MCF 10A (cell line): ENCODE measurements at regions of chr5 and their contacts with region 1.

Region 1: DNA sequence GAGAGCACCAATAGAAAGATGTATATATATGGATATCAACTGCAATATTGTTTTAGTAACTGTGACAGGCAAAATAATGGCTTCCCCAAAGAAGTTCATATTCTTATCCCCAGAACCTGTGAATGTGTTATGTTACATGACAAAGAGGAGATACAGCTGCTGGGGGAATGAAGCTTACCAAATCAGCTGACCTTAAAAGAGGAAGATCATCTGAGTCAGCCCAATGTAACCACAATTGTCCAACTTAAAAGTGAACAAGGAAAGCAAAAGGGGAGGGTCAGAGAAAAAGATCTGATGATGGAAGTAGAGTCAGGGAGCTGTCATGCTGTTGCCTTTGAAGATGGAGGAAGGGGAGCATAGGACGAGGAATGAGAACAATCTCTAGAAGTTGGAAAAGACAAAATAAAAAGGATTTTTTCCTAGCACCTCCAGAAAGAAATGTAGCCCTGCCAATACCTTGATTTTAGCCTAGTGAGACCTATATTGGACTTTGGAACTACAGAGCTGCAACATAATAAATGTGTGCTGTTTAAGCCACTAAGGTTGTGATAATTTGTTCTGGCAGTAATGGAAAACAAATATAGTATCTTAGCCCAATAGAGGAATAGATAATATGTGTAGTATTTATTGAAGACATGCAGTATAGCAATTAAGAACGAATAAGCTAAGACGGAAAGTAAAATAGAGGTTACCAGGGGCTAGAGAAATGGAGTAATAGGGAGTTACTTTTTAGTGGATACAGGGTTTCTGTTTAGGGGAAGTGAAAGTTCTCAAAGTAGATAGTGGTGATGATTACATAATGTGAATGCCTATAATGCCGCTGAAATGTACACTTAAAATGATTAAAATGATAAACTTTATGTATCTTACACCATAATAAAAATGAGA is 115.9 kb downstream of the PIK3R1 start:
- DNase-seq: no peak
- H3K4me3 Mint-ChIP-seq: no peak overlapping the region
- H3K27ac Mint-ChIP-seq: no peak overlapping the region
- H3K4me1 Mint-ChIP-seq: peaks cover 31% of the 10 kb centered on the region
- H3K27me3 Mint-ChIP-seq: no peaks in the 10 kb centered on the region
- CTCF ChIP-seq: no peak

Region 2: DNA sequence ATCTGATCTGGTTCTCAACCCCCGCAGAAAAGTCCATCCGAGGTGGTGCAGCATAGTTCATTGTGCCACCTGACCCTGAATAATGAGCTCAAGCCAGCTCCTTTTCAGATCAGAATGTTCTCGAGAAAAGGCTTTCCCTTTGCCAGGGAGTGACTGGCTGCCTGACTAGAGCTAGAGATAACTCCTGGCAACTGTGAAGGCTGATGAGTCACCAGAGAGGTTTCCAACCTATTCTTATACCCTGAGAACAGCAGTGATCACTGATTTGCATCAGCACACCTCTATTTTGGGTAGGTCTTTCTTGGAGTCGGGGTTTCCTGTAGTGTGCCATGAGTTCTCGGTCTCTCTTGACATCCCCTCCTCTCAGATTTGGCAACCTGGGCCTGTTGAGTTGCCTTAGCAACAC is 12.0 kb after region 1 on chr5:
- CTCF ChIA-PET with region 1: interaction called, 12 read pairs
- POLR2A ChIA-PET with region 1: interaction called, 9 read pairs
- intact Hi-C with region 1: loop called (anchors 1 kb)
- DNase-seq: peak; percentile 97
- H3K4me3 Mint-ChIP-seq: no peak overlapping the region
- H3K27ac Mint-ChIP-seq: peak overlapping the region; percentile 94
- H3K4me1 Mint-ChIP-seq: peaks cover 38% of the 10 kb centered on the region
- H3K27me3 Mint-ChIP-seq: no peaks in the 10 kb centered on the region
- CTCF ChIP-seq: no peak

Region 3: DNA sequence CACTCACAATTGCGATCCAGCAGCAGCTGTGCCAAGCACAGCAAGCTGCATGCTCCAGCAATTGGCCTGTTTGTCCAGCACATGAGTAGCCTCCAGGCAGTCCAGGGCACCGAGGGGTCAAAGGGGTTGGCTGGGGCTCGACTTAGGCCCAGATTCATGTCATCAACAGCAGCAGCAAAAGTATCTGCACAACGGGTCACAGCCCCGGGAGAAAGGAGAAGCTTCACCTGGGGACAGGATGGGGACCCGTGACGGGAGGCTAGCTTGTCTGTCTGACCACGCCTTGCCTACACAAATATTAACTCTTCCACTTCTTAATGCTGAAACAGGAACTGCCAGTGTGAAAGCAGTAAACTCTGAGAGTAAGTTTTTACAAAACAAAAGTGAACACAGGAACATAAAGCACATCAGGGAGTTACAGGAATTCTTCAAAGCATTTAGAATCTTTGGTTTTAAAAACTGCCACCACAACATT is 75.4 kb after region 1 on chr5:
- CTCF ChIA-PET with region 1: no interaction called
- POLR2A ChIA-PET with region 1: no interaction called
- intact Hi-C with region 1: loop called (anchors 5 kb)
- DNase-seq: no peak
- H3K4me3 Mint-ChIP-seq: no peak overlapping the region
- H3K27ac Mint-ChIP-seq: peak overlapping the region; percentile 69
- H3K4me1 Mint-ChIP-seq: peaks cover 34% of the 10 kb centered on the region
- H3K27me3 Mint-ChIP-seq: no peaks in the 10 kb centered on the region
- CTCF ChIP-seq: no peak

Region 4: GRCh38 chr5:68433923-68434879 is 102.8 kb after region 1 on chr5:
- CTCF ChIA-PET with region 1: interaction called, 4 read pairs
- POLR2A ChIA-PET with region 1: interaction called, 3 read pairs
- intact Hi-C with region 1: loop called (anchors 5 kb)
- DNase-seq: peak; percentile 99
- H3K4me3 Mint-ChIP-seq: peak overlapping the region; percentile 46
- H3K27ac Mint-ChIP-seq: peak overlapping the region; percentile 93
- H3K4me1 Mint-ChIP-seq: peaks cover 30% of the 10 kb centered on the region
- H3K27me3 Mint-ChIP-seq: no peaks in the 10 kb centered on the region
- CTCF ChIP-seq: no peak